Activated T-helper 2 cell treated with anti-CD3 and anti-CD28 coated beads, Interferon-gamma antibody, Interleukin-2, Interleukin-4, amounts not matched to agents 10 μg/mL and 5 μg/mL and 100 μg/mL, durations not matched to agents 14 hours and 24 hours and 36 hours (primary cell): ENCODE measurements at regions of chr3 and their contacts with region 1.

Region 1: DNA sequence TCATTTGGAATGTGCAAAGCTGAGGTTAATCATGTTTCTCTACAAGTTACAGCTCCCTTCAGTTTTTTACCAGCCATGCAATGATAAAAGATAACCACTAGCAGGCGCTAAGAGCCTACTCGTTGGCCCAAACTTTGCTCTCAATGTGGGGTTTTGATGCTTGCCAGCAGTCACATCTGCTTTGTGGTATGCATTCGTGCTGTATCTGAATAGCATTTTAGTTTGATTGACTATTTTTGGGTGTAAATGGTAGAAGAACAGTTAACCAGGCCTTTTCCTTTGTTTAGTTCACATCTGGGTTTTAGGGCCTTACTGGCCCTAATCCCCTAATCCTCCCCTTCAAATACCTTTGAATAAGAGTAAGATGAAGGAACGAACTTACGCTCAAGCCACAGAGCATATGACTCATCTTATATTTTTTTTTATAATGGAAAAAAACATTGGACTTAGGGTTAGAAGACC is 4.4 kb upstream of the CLDN11 start:
- DNase-seq: no peak
- H3K4me3 Mint-ChIP-seq: no peak overlapping the region
- H3K27ac Mint-ChIP-seq: no peak overlapping the region
- H3K4me1 Mint-ChIP-seq: peaks cover 3% of the 10 kb centered on the region
- H3K27me3 Mint-ChIP-seq: peaks cover 35% of the 10 kb centered on the region

Region 2: DNA sequence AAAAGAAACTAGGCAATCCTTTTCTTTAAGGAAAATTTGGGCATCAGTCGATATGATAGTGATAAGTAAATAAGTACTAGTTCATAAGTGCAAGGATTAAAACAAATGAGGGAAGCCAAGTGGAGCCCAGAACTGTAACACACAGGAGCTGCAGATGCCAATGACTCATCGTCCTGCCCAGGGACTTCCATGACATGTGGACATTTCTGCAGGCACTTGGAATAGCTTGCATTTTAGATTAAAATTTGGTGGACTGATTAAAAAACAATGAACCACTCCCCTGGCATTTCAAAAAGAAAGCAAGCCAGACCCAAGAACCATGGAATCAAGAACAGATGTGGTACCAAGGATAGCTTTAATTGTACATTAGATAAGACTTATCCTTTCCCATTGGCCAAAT is 499.9 kb before region 1 on chr3:
- intact Hi-C with region 1: no loop called
- DNase-seq: no peak
- H3K4me3 Mint-ChIP-seq: no peak overlapping the region
- H3K27ac Mint-ChIP-seq: no peak overlapping the region
- H3K4me1 Mint-ChIP-seq: no peaks in the 10 kb centered on the region
- H3K27me3 Mint-ChIP-seq: no peaks in the 10 kb centered on the region

Region 3: DNA sequence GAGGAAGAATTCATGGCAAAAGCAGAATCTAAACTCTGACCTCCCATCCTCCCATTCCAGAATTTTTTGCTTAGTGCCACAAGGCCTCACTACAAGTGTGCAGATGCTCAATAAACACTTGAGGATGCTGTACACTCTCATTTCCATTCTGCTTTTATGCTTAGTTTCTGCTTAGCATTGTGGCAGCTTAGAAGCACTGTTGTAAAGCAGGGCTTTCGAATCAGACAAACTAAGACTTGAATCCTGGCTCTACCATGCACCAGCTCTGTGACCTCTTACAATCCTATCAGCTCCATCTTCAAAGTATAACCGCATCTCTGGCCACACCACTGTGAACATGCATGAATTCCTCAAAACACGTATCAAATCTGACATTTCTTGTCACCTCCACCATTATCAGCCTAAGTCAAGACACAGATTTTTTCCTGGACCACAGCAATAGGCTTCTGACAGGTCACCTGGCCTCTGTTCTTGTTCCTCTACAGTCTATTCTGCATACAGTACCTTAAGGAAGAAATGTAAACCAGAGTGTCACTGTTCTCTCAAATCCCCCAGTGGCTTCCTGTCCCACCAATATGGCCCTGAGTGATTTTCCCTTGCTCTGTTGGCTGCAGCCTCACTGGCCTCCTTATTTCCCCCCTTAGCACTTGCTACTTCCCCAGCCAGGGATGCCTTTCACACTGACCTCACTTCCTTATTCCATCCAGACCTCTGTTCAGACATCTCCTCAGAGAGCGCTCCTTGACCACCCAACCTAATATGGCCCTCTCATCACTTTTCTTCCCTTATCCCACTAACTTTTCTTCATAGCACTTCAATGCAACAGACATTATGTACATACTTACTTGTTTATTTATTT is 224.6 kb before region 1 on chr3:
- intact Hi-C with region 1: loop called (anchors 5 kb)
- DNase-seq: no peak
- H3K4me3 Mint-ChIP-seq: no peak overlapping the region
- H3K27ac Mint-ChIP-seq: no peak overlapping the region
- H3K4me1 Mint-ChIP-seq: peaks cover 6% of the 10 kb centered on the region
- H3K27me3 Mint-ChIP-seq: peaks cover 9% of the 10 kb centered on the region

Region 4: GRCh38 chr3:170307671-170308403 is 106.4 kb before region 1 on chr3:
- intact Hi-C with region 1: loop called (anchors 2 kb)
- DNase-seq: no peak
- H3K4me3 Mint-ChIP-seq: no peak overlapping the region
- H3K27ac Mint-ChIP-seq: no peak overlapping the region
- H3K4me1 Mint-ChIP-seq: no peaks in the 10 kb centered on the region
- H3K27me3 Mint-ChIP-seq: no peaks in the 10 kb centered on the region

Region 5: GRCh38 chr3:170368921-170369320 is 45.3 kb before region 1 on chr3:
- intact Hi-C with region 1: no loop called
- DNase-seq: no peak
- H3K4me3 Mint-ChIP-seq: no peak overlapping the region
- H3K27ac Mint-ChIP-seq: no peak overlapping the region
- H3K4me1 Mint-ChIP-seq: peaks cover 12% of the 10 kb centered on the region
- H3K27me3 Mint-ChIP-seq: no peaks in the 10 kb centered on the region

Region 6: GRCh38 chr3:170397579-170398177 is 16.6 kb before region 1 on chr3:
- intact Hi-C with region 1: no loop called
- DNase-seq: no peak
- H3K4me3 Mint-ChIP-seq: no peak overlapping the region
- H3K27ac Mint-ChIP-seq: no peak overlapping the region
- H3K4me1 Mint-ChIP-seq: no peaks in the 10 kb centered on the region
- H3K27me3 Mint-ChIP-seq: no peaks in the 10 kb centered on the region

Region 7: GRCh38 chr3:170499565-170500156 is 85.4 kb after region 1 on chr3:
- intact Hi-C with region 1: loop called (anchors 5 kb)
- DNase-seq: no peak
- H3K4me3 Mint-ChIP-seq: no peak overlapping the region
- H3K27ac Mint-ChIP-seq: no peak overlapping the region
- H3K4me1 Mint-ChIP-seq: no peaks in the 10 kb centered on the region
- H3K27me3 Mint-ChIP-seq: peaks cover 13% of the 10 kb centered on the region

Region 8: DNA sequence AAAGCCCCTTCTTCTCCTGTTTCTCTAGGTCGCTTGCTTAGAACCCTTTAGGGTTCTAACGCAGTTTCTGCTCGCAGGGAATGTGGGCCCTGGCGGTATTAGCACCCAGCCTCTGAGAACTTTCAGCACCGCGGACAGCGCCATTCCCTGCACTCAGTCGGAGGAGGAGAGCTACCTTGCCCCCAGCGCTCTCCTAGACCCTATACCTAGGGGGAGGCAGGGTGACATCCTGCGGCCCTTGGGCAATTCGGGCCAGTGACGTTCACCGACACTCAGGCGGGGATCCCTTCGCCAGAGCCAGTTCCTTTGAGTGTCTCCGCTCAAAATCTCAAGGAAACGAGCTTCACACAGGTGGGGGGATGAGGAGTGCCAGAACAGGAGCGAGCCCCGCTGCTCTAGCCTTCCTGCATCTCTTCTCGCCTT is 170.4 kb after region 1 on chr3:
- intact Hi-C with region 1: loop called (anchors 10 kb)
- DNase-seq: peak; percentile 39
- H3K4me3 Mint-ChIP-seq: no peak overlapping the region
- H3K27ac Mint-ChIP-seq: no peak overlapping the region
- H3K4me1 Mint-ChIP-seq: peaks cover 3% of the 10 kb centered on the region
- H3K27me3 Mint-ChIP-seq: peaks cover 61% of the 10 kb centered on the region

Region 9: GRCh38 chr3:170689893-170690660 is 275.8 kb after region 1 on chr3:
- intact Hi-C with region 1: loop called (anchors 5 kb)
- DNase-seq: peak; percentile 20
- H3K4me3 Mint-ChIP-seq: no peak overlapping the region
- H3K27ac Mint-ChIP-seq: no peak overlapping the region
- H3K4me1 Mint-ChIP-seq: peaks cover 5% of the 10 kb centered on the region
- H3K27me3 Mint-ChIP-seq: no peaks in the 10 kb centered on the region

Region 10: GRCh38 chr3:170811928-170812591 is 397.8 kb after region 1 on chr3:
- intact Hi-C with region 1: loop called (anchors 1 kb)
- DNase-seq: peak; percentile 56
- H3K4me3 Mint-ChIP-seq: no peak overlapping the region
- H3K27ac Mint-ChIP-seq: no peak overlapping the region
- H3K4me1 Mint-ChIP-seq: peaks cover 10% of the 10 kb centered on the region
- H3K27me3 Mint-ChIP-seq: peaks cover 6% of the 10 kb centered on the region

Region 11: GRCh38 chr3:171606151-171606751 is 1192.0 kb after region 1 on chr3:
- intact Hi-C with region 1: no loop called
- DNase-seq: no peak
- H3K4me3 Mint-ChIP-seq: no peak overlapping the region
- H3K27ac Mint-ChIP-seq: no peak overlapping the region
- H3K4me1 Mint-ChIP-seq: no peaks in the 10 kb centered on the region
- H3K27me3 Mint-ChIP-seq: peaks cover 26% of the 10 kb centered on the region